ENCODE measurements at regions of chr1 and their contacts with region 1.

Region 1: DNA sequence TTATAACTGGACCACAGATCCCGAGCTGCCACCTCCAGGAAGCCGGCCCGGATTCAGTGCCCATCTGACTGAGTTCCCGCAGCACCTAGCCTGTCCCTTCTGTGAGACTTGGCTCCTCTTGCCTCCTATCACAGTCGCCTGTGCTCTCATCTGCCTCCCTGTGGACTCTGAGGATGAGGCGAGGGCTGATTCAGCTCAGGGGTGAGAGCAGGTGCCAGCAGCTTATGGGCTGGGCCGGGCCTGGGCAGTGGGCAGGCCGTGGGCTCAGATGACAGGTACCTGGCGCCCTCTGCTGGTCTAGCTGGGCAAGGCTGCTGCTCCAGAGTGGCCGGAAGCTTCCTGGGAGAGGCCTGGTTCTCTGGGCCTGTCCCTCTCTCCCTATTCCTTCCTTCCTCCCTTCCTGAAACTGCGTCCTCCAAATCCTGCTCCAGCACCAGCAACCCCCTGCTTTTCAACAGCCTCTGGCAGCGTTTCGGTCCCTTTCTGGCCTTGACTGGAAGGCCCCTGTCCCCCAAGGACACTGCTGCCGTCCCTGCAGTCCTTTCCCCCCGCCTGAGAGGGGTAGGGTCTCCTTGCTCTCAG is 17.3 kb upstream of the PCSK9 start:
- DNase-seq: peak; percentile 88
- ATAC-seq: peak; percentile 100
- H3K4me3 ChIP-seq: no peak overlapping the region
- H3K27ac ChIP-seq: no peak overlapping the region
- H3K4me1 ChIP-seq: no peaks in the 10 kb centered on the region
- H3K27me3 ChIP-seq: peaks cover 29% of the 10 kb centered on the region
- CTCF ChIP-seq: peak; percentile 97
- POLR2A ChIP-seq: peak; percentile 40; the same call in 1 of the 2 replicates
- RAD21 ChIP-seq: peak; percentile 87

Region 2: DNA sequence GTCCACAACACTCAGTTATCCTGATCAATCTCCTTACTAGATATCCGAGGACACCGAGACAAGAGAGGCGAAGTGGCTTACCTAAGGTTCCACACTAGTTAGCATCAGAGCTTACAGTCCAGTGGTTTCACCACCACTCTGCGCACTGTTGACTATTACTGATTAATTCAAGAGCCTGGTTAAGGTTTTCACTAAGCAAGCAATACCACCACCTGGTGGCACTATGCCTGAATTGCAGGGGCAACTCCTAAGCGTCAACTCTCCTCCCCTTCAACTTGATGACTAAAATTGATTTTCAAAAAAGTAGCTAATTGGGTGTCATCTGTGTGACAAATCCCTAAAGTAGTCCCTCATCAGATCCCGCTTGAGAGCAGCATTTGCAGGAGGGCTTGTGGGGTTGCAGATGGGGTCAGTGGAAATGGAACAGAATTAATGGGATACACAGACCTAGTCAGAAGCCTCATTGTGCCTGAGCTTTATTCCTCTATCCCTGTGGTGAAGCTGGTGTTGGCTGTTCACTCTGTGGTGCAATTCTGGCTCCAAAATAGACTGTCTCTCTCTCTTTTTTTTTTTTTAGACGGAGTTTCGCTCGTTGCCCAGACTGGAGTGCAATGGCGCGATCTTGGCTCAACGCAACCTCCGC is 230.1 kb before region 1 on chr1:
- CTCF ChIA-PET with region 1: no interaction called
- POLR2A ChIA-PET with region 1: no interaction called
- dilution Hi-C with region 1: no loop called
- in situ Hi-C with region 1: no loop called
- intact Hi-C with region 1: no loop called
- DNase-seq: peak; percentile 34
- ATAC-seq: peak; percentile 56
- H3K4me3 ChIP-seq: no peak overlapping the region
- H3K27ac ChIP-seq: no peak overlapping the region
- H3K4me1 ChIP-seq: no peaks in the 10 kb centered on the region
- H3K27me3 ChIP-seq: peaks cover 48% of the 10 kb centered on the region
- CTCF ChIP-seq: peak; percentile 50
- POLR2A ChIP-seq: no peak
- RAD21 ChIP-seq: peak; percentile 57

Region 3: DNA sequence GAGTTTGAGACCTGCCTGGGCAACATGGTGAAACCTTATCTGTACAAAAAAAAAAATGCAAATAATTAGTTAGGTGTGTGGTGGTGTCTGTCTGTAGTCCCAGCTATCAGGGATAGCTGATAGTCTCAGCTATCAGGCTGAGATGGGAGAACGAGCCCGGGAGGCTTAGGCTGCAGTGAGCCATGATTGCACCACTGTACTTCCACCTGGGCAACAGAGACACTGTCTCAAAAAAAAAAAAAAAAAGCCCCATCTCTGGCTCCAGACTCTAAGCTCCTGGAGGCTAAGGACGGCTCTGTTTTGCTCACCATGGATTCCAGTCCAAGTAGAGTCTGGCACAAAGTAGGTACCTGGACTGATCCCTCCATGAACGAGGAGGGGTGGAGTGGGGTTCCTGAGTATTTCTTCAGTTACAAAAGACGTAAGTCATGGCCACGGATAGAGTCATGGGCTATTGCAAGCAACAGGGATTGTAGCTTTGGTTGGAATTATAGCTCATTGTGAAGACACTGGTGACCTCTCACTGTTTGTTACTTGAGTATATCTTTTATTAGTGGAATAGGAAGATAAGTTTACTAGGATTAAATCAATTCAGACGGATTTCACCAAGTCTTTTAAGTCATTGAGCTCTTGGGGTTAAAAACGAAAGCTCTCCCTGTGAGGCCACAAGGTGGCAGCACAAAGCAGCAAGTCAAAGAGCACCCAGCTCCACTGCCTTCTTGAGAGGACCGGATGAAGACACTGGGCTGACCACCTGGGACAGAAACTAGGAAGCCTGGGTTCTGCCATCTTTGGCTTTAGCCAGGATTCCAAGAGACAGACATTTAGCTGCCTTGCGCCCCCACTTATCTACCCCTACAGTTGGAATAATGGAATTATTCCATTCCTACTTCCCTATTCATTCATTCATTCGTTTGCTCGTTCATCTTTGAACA is 77.2 kb before region 1 on chr1:
- CTCF ChIA-PET with region 1: interaction called, 35 read pairs
- POLR2A ChIA-PET with region 1: no interaction called
- dilution Hi-C with region 1: no loop called
- in situ Hi-C with region 1: no loop called
- intact Hi-C with region 1: loop called (anchors 1 kb)
- DNase-seq: peak; percentile 85
- ATAC-seq: peak; percentile 94
- H3K4me3 ChIP-seq: no peak overlapping the region
- H3K27ac ChIP-seq: no peak overlapping the region
- H3K4me1 ChIP-seq: no peaks in the 10 kb centered on the region
- H3K27me3 ChIP-seq: no peaks in the 10 kb centered on the region; the same call in 1 of the 2 replicates
- CTCF ChIP-seq: peak; percentile 79
- POLR2A ChIP-seq: no peak
- RAD21 ChIP-seq: peak; percentile 80

Region 4: DNA sequence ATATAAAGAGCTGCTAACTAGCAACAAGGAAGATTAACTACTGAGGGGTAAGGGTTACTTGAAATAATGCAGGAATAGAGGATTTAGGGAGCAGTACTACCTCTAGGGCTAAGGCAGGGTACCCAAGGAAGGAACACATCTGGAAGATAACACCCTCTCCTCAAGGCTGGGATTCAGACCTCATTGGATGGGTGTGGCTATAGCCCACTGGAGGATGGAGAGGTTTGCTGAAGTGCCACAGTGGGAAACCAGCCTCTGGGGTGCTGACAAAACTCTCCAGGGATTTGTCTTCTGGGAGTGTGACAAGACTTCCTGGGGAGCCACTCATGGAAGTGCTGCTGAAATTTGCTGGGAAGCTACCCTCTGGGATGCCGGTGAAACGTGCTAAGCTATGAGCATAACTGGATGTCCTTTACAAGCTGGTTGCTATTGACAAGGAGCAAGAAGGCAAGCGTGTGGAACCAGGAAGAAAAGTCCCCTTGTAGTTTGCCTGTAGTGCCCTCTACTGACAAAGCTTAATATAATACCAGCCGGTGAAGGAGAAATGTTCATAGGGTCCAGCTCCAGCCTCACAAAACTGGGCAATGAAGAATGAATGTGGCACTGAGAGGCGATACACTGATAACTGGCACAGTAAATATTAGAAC is 315.9 kb after region 1 on chr1:
- CTCF ChIA-PET with region 1: no interaction called
- POLR2A ChIA-PET with region 1: no interaction called
- dilution Hi-C with region 1: no loop called
- in situ Hi-C with region 1: no loop called
- intact Hi-C with region 1: no loop called
- DNase-seq: peak; percentile 79
- ATAC-seq: peak; percentile 96
- H3K4me3 ChIP-seq: no peak overlapping the region
- H3K27ac ChIP-seq: no peak overlapping the region
- H3K4me1 ChIP-seq: no peaks in the 10 kb centered on the region
- H3K27me3 ChIP-seq: no peaks in the 10 kb centered on the region
- CTCF ChIP-seq: peak; percentile 77
- POLR2A ChIP-seq: no peak
- RAD21 ChIP-seq: peak; percentile 88